Panc1 (cell line): ENCODE measurements at regions of chr1 and their contacts with region 1.

Region 1: GRCh38 chr1:223087291-223088255 is 55.5 kb downstream of the TLR5 start:
- DNase-seq: no peak
- ATAC-seq: no peak
- H3K4me3 ChIP-seq: no peak overlapping the region
- H3K27ac ChIP-seq: no peak overlapping the region
- H3K4me1 ChIP-seq: no peaks in the 10 kb centered on the region
- H3K27me3 ChIP-seq: no peaks in the 10 kb centered on the region
- CTCF ChIP-seq: no peak

Region 2: DNA sequence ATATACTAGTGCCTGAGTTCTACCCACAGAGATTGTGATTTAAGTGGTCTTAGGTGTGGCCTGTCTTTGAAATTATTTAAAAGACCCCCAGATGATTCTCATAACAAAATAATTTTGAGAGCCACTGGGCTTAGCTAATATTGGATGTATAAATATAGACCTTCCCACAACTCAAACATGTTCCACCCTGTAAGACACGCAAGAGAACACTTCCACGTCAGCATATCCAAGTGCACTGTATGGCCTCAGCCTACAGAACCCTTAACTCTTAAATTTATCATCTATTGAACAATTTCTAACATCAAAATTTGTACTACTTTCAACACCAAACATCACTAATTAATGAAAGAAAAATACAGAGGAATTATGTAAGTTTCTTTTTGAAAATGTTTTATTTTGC is 348.1 kb before region 1 on chr1:
- CTCF ChIA-PET with region 1: interaction called, 12 read pairs
- POLR2A ChIA-PET with region 1: no interaction called
- in situ Hi-C with region 1: loop called (anchors 25 kb)
- intact Hi-C with region 1: loop called (anchors 5 kb)
- DNase-seq: no peak
- ATAC-seq: no peak
- H3K4me3 ChIP-seq: no peak overlapping the region
- H3K27ac ChIP-seq: no peak overlapping the region
- H3K4me1 ChIP-seq: no peaks in the 10 kb centered on the region; the same call in 1 of the 2 replicates
- H3K27me3 ChIP-seq: no peaks in the 10 kb centered on the region
- CTCF ChIP-seq: no peak

Region 3: GRCh38 chr1:223074445-223075300 is 12.9 kb before region 1 on chr1:
- CTCF ChIA-PET with region 1: no interaction called
- POLR2A ChIA-PET with region 1: no interaction called
- in situ Hi-C with region 1: no loop called
- intact Hi-C with region 1: no loop called
- DNase-seq: no peak
- ATAC-seq: no peak
- H3K4me3 ChIP-seq: no peak overlapping the region
- H3K27ac ChIP-seq: no peak overlapping the region
- H3K4me1 ChIP-seq: no peaks in the 10 kb centered on the region
- H3K27me3 ChIP-seq: peaks cover 7% of the 10 kb centered on the region; the same call in 1 of the 2 replicates
- CTCF ChIP-seq: no peak

Region 4: DNA sequence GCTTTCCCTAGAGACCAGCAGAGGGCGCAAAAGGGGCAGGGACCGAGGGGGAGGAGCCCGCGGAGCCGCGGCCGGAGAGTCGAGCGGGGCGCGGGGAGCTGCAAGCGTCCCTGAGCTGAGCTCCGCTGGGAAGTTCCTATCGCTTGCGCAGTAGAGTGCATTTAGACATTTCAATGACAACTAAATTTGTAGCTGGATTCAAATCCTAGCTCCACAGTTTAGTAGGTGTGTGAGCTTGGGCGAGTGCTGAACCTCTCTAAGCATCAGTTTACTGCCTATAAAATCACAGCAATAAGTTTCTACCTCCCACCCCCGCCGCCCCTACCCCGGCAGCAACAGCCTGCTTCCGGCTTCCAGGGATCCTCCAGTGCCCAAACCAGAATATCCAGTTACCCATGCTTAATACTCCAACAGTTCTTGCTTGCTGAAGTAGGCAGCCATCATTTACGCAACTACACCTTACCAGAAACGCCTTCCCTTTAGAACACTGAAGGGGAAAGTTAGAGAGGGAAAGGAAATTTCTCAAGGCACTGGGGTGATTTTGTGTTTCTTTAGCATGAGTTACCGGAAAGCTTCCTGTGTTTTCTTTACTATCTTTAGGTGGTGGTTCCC is 46.4 kb after region 1 on chr1:
- CTCF ChIA-PET with region 1: interaction called, 11 read pairs
- POLR2A ChIA-PET with region 1: no interaction called
- in situ Hi-C with region 1: no loop called
- intact Hi-C with region 1: no loop called
- DNase-seq: no peak
- ATAC-seq: peak; percentile 95
- H3K4me3 ChIP-seq: peak overlapping the region; percentile 19 to 41
- H3K27ac ChIP-seq: no peak overlapping the region
- H3K4me1 ChIP-seq: peaks cover 9% of the 10 kb centered on the region
- H3K27me3 ChIP-seq: peaks cover 22% of the 10 kb centered on the region
- CTCF ChIP-seq: peak; percentile 98